ENCODE measurements at regions of chr18 and their contacts with region 1.

Region 1: DNA sequence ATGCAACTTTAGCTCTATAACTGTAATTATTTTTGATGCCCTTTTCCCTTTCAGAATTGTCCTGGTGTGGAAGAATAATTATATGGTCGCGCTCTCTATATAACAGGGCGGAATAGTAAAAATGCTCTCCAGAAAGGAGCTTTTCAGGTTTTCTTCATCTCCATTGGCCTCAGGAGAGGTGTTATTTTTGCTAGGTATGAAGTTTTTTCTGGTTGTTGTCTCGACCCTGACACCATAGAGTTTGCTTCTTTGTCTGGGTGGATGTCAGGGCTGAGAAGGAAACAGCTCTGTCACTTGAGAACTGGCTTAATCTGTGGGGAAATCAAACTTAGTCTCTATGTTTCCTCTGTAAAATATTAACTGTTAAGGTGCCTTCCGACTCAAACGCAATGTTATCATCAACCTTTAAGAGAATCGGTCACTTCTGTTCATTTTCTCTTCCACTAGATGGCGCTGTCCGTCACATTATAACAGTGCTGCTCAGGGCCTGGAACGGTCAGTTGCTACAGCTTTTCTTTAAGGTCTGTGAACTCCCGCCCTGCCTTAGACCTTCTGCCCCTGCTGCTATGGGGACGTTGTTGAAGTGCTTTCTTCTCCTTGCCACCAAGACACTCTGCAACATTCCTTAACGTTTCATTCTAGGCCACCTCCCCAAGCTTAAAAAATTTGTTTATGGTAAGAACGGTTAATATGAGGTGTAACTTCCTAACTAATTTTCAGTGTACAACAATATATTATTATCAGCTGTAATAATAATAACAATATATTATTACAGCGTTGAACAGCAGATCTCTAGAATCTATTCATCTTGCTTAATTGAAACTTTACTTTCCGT is 23.8 kb upstream of the SERPINB12 start:
- DNase-seq: peak in 1 of 2 donors; percentile 50
- H3K4me3 ChIP-seq: no peak overlapping the region
- H3K27ac ChIP-seq: no peak overlapping the region
- H3K4me1 ChIP-seq: no peaks in the 10 kb centered on the region
- H3K27me3 ChIP-seq: peaks cover 0 to 2% of the 10 kb centered on the region in 2 donors
- CTCF ChIP-seq: peak; percentile 69 to 79

Region 2: GRCh38 chr18:63578357-63578958 is 60.1 kb after region 1 on chr18:
- intact Hi-C with region 1: loop called (anchors 10 kb)
- DNase-seq: no peak
- H3K4me3 ChIP-seq: no peak overlapping the region
- H3K27ac ChIP-seq: no peak overlapping the region
- H3K4me1 ChIP-seq: no peaks in the 10 kb centered on the region
- H3K27me3 ChIP-seq: no peaks in the 10 kb centered on the region
- CTCF ChIP-seq: peak; percentile 42 to 56

Region 3: GRCh38 chr18:63848159-63848558 is 329.8 kb after region 1 on chr18:
- intact Hi-C with region 1: loop called (anchors 5 kb)
- DNase-seq: no peak
- H3K4me3 ChIP-seq: no peak overlapping the region
- H3K27ac ChIP-seq: no peak overlapping the region
- H3K4me1 ChIP-seq: no peaks in the 10 kb centered on the region
- H3K27me3 ChIP-seq: no peaks in the 10 kb centered on the region
- CTCF ChIP-seq: peak; percentile 33 to 40